Right lobe of liver (tissue), 6 donors: ENCODE measurements at regions of chr2 and their contacts with region 1.

Region 1: GRCh38 chr2:134782792-134783191 is 55.6 kb upstream of the ACMSD start:
- DNase-seq: peak in 1 of 3 donors; percentile 67
- ATAC-seq: peak; percentile 83 to 95 (median 93)
- H3K4me3 ChIP-seq: no peak overlapping the region
- H3K27ac ChIP-seq: peak overlapping the region in 1 of 3 donors; percentile 73
- H3K4me1 ChIP-seq: no peaks in the 10 kb centered on the region
- H3K27me3 ChIP-seq: no peaks in the 10 kb centered on the region
- CTCF ChIP-seq: peak; percentile 9 to 64 (median 55)
- POLR2A ChIP-seq: no peak

Region 2: GRCh38 chr2:134900151-134900550 is 117.4 kb after region 1 on chr2:
- intact Hi-C with region 1: loop called in 1 of 2 experiments (anchors 10 kb)
- DNase-seq: no peak
- ATAC-seq: no peak
- H3K4me3 ChIP-seq: no peak overlapping the region
- H3K27ac ChIP-seq: no peak overlapping the region
- H3K4me1 ChIP-seq: peaks cover 0 to 18% (median 6%) of the 10 kb centered on the region in 4 donors
- H3K27me3 ChIP-seq: no peaks in the 10 kb centered on the region
- CTCF ChIP-seq: no peak
- POLR2A ChIP-seq: no peak